ENCODE measurements at regions of chr14 and their contacts with region 1.

Region 1: GRCh38 chr14:61342486-61342885 is 21.1 kb downstream of the PRKCH start:
- DNase-seq: peak; percentile 91
- H3K4me3 Mint-ChIP-seq: peak overlapping the region; percentile 82
- H3K27ac Mint-ChIP-seq: peak overlapping the region; percentile 98
- H3K4me1 Mint-ChIP-seq: peaks cover 94% of the 10 kb centered on the region
- H3K27me3 Mint-ChIP-seq: no peaks in the 10 kb centered on the region

Region 2: GRCh38 chr14:61177279-61178225 is 164.9 kb before region 1 on chr14:
- CTCF ChIA-PET with region 1: no interaction called
- POLR2A ChIA-PET with region 1: no interaction called
- intact Hi-C with region 1: no loop called
- DNase-seq: peak; percentile 57
- H3K4me3 Mint-ChIP-seq: peak overlapping the region; percentile 55
- H3K27ac Mint-ChIP-seq: peak overlapping the region; percentile 92
- H3K4me1 Mint-ChIP-seq: peaks cover 49% of the 10 kb centered on the region
- H3K27me3 Mint-ChIP-seq: no peaks in the 10 kb centered on the region

Region 3: GRCh38 chr14:61321385-61322010 is 21.0 kb before region 1 on chr14 and contains the start of gene PRKCH:
- CTCF ChIA-PET with region 1: interaction called, 7 read pairs
- POLR2A ChIA-PET with region 1: interaction called, 19 read pairs
- intact Hi-C with region 1: no loop called
- DNase-seq: peak; percentile 90
- H3K4me3 Mint-ChIP-seq: peak within 1 kb of the TSS; percentile 99
- H3K27ac Mint-ChIP-seq: peak within 1 kb of the TSS; percentile 93
- H3K4me1 Mint-ChIP-seq: peaks cover 24% of the 10 kb centered on the region
- H3K27me3 Mint-ChIP-seq: no peaks in the 10 kb centered on the region
- total RNA-seq, gene PRKCH: 142 to 147 TPM

Region 4: GRCh38 chr14:61326847-61327246 is 15.6 kb before region 1 on chr14:
- CTCF ChIA-PET with region 1: interaction called, 57 read pairs
- POLR2A ChIA-PET with region 1: interaction called, 216 read pairs
- intact Hi-C with region 1: loop called (anchors 1 kb)
- DNase-seq: no peak
- H3K4me3 Mint-ChIP-seq: peak overlapping the region; percentile 99
- H3K27ac Mint-ChIP-seq: peak overlapping the region; percentile 93
- H3K4me1 Mint-ChIP-seq: peaks cover 64% of the 10 kb centered on the region
- H3K27me3 Mint-ChIP-seq: no peaks in the 10 kb centered on the region

Region 5: DNA sequence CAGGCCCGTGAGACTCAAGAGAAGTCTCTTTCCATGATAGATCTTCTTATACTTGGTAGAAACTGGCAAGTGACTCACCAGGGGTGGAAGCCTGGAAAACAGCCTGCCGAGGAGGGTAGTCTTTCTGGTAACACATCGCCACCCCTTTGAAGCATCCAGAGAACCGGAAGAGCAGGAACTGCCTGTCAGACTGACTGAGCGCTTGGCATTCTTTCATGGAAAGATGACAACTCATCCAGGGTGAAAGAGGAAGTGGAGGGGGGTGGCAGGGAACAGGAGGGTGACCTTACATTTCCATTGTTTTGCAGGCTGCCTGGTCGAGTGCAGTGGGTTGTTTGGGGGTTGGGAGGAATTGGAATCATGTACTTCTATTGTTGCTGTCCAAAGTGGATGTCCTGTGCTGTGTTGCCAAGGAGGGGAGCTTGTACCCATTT is 13.4 kb after region 1 on chr14:
- CTCF ChIA-PET with region 1: interaction called, 9 read pairs
- POLR2A ChIA-PET with region 1: interaction called, 216 read pairs
- intact Hi-C with region 1: loop called (anchors 1 kb)
- DNase-seq: peak; percentile 79
- H3K4me3 Mint-ChIP-seq: peak overlapping the region; percentile 63
- H3K27ac Mint-ChIP-seq: peak overlapping the region; percentile 87
- H3K4me1 Mint-ChIP-seq: peaks cover 89% of the 10 kb centered on the region
- H3K27me3 Mint-ChIP-seq: no peaks in the 10 kb centered on the region

Region 6: DNA sequence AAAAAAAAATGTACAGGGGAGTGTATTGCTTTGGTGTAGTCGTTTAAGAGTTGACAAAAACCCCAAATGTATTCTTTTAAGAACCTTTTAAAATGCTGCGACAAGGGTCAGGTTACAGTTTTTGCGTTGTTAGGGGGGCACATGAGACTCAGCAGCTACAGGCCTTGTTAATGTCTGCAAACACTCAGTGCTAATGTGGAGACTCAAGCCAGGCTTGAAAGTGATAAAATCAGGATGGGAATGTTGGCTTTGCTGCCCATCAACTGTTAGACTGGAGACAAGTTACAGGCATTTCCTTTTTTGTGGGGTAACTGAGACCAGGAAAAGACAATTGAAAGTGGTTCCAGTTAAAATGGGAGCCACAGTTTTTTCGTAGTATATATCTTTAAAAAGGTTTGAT is 63.7 kb after region 1 on chr14:
- CTCF ChIA-PET with region 1: interaction called, 3 read pairs
- POLR2A ChIA-PET with region 1: interaction called, 3 read pairs
- intact Hi-C with region 1: loop called (anchors 2 kb)
- DNase-seq: no peak
- H3K4me3 Mint-ChIP-seq: no peak overlapping the region
- H3K27ac Mint-ChIP-seq: peak overlapping the region; percentile 72
- H3K4me1 Mint-ChIP-seq: peaks cover 69% of the 10 kb centered on the region
- H3K27me3 Mint-ChIP-seq: no peaks in the 10 kb centered on the region

Region 7: DNA sequence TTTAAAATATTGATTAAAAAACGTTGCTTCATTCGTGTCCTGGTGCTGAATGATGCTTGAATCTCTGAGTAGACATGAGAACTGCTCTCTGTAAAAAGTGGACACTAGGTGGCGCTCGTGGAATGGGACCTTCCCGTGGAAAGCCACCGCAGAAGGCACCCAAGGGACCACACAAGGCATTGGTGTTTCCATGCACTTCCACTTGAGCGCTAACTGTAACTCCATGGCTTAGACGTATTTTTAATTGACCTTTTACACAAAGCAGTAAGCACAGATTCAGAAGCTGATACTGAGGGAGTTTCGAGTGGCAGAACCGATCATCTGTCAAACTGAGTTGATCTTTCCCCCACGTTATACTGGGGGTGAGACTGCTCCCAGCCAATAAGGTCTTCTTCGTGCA is 114.2 kb after region 1 on chr14:
- CTCF ChIA-PET with region 1: interaction called, 5 read pairs
- POLR2A ChIA-PET with region 1: interaction called, 5 read pairs
- intact Hi-C with region 1: loop called (anchors 1 kb)
- DNase-seq: peak; percentile 87
- H3K4me3 Mint-ChIP-seq: no peak overlapping the region
- H3K27ac Mint-ChIP-seq: peak overlapping the region; percentile 60
- H3K4me1 Mint-ChIP-seq: peaks cover 81% of the 10 kb centered on the region
- H3K27me3 Mint-ChIP-seq: no peaks in the 10 kb centered on the region

Region 8: GRCh38 chr14:61512026-61512834 is 169.7 kb after region 1 on chr14:
- CTCF ChIA-PET with region 1: no interaction called
- POLR2A ChIA-PET with region 1: no interaction called
- intact Hi-C with region 1: loop called (anchors 5 kb)
- DNase-seq: no peak
- H3K4me3 Mint-ChIP-seq: peak overlapping the region; percentile 51
- H3K27ac Mint-ChIP-seq: peak overlapping the region; percentile 98
- H3K4me1 Mint-ChIP-seq: peaks cover 95% of the 10 kb centered on the region
- H3K27me3 Mint-ChIP-seq: no peaks in the 10 kb centered on the region

Measured in activated CD4-positive, alpha-beta memory T cell treated with anti-CD3 and anti-CD28 coated beads for 36 hours (primary cell).